ENCODE measurements at regions of chr14 and their contacts with region 1.

Region 1: GRCh38 chr14:74945823-74946682 is 9.3 kb downstream of the PGF start:
- DNase-seq: no peak
- H3K4me3 ChIP-seq: no peak overlapping the region
- CTCF ChIP-seq: peak; percentile 95

Region 2: GRCh38 chr14:74618078-74618952 is 327.7 kb before region 1 on chr14:
- CTCF ChIA-PET with region 1: no interaction called
- POLR2A ChIA-PET with region 1: no interaction called
- DNase-seq: no peak
- H3K4me3 ChIP-seq: no peak overlapping the region
- CTCF ChIP-seq: no peak

Region 3: GRCh38 chr14:74860906-74861733 is 84.9 kb before region 1 on chr14:
- CTCF ChIA-PET with region 1: interaction called, 16 read pairs
- POLR2A ChIA-PET with region 1: no interaction called
- DNase-seq: no peak
- H3K4me3 ChIP-seq: no peak overlapping the region
- CTCF ChIP-seq: peak; percentile 84

Region 4: GRCh38 chr14:74932401-74932901 is 13.6 kb before region 1 on chr14:
- CTCF ChIA-PET with region 1: interaction called, 42 read pairs
- POLR2A ChIA-PET with region 1: no interaction called
- DNase-seq: no peak
- H3K4me3 ChIP-seq: no peak overlapping the region
- CTCF ChIP-seq: no peak

Region 5: DNA sequence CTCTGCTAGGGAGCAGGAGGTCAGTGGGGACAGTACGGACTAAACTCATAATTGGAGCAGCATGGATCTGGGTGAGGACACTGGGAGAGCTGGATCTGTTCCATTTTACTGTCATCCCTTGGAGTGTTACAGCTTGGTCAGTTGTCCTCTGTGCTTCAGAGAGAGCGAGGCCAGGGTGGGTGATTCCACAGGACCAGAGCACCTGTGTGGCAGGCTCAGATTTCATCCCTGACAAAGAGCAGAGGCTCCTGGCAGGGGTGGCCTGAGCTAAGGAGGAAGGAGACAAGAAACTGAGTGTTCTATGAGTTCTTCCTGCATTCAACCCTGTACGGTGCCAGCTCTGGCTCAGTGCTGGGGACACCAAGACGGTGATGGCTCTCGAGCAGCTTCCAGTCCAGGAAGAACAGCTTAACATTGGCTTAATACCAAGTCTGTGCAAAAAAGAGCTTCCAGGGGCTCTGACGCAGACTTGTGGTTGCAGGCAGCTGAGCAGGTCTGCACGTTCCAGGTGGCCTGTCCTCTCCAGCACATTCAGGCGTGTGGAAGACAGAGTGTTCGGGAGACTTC is 17.7 kb after region 1 on chr14:
- CTCF ChIA-PET with region 1: interaction called, 52 read pairs
- POLR2A ChIA-PET with region 1: no interaction called
- DNase-seq: no peak
- H3K4me3 ChIP-seq: no peak overlapping the region
- CTCF ChIP-seq: no peak

Region 6: DNA sequence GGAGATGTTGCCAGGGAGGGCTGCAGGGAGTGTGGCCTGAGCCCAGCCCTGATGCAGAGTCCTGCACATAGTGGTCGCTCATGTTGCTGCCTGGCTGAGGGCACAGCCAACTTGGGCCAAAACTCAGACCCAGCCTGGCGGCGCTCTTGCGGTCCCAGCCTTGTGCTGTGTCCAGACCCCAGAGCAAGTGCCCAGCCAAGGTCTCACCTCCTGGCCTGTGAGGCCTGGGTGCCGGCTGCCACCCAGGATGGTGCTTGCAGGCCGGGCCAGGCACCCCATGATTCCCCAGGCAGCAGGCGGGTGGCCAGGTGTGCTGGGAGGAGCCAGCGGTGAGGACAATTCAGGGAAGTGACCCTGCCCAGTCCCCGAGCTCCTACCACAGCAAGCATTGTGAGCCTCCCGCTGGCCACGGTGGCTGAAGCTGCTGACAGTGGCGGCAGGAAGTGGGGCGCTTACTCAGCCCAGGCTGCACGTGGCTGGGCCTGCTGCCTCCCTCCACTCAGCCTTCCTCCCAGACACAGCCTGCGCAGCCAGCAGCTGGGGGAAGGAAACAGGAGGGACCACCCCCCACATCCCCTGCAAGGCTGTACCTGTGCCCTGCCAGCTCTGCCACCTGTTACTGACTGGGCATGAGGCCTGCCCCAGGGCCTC is 27.1 kb after region 1 on chr14:
- CTCF ChIA-PET with region 1: interaction called, 13 read pairs
- POLR2A ChIA-PET with region 1: no interaction called
- DNase-seq: no peak
- H3K4me3 ChIP-seq: no peak overlapping the region
- CTCF ChIP-seq: no peak

Region 7: DNA sequence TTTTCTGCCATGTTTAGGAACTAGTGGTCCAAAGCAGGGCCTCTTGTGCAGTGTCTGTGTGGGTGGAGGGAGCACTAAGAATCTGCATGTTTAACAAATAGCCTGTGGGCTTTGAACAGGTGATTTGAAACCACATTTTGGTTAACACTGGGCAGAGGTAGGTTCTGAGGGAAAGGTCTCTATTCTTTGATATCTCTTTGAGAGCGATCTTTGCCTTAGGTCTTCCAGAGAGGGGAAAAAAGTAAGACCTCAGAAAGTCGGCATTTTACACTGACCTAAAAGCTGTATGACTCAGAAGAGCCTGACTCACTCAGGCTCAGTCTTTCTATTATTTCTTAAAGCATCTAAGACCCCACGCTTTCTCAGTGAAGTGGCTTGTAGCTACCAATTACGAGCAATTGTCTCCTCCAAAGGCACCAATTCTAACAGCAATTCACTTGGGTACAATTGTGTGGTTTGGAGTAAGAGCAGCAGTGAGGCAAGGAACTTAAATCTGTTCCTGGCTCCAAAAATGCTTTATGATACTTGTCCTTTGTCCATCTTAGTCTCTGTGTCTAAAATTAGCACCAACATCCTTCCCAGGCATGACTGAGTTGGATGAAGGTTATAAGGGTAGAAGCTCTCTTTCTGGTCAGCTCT is 65.4 kb after region 1 on chr14:
- CTCF ChIA-PET with region 1: interaction called, 15 read pairs
- POLR2A ChIA-PET with region 1: no interaction called
- DNase-seq: peak; percentile 26
- H3K4me3 ChIP-seq: no peak overlapping the region
- CTCF ChIP-seq: no peak

Region 8: GRCh38 chr14:75069045-75069810 is 123.2 kb after region 1 on chr14 and contains the start of gene ZC2HC1C:
- CTCF ChIA-PET with region 1: interaction called, 38 read pairs
- POLR2A ChIA-PET with region 1: no interaction called
- DNase-seq: no peak
- H3K4me3 ChIP-seq: peak within 1 kb of the TSS; percentile 67
- CTCF ChIP-seq: no peak